Caco-2 (cell line): ENCODE measurements at regions of chr14 and their contacts with region 1.

Region 1: DNA sequence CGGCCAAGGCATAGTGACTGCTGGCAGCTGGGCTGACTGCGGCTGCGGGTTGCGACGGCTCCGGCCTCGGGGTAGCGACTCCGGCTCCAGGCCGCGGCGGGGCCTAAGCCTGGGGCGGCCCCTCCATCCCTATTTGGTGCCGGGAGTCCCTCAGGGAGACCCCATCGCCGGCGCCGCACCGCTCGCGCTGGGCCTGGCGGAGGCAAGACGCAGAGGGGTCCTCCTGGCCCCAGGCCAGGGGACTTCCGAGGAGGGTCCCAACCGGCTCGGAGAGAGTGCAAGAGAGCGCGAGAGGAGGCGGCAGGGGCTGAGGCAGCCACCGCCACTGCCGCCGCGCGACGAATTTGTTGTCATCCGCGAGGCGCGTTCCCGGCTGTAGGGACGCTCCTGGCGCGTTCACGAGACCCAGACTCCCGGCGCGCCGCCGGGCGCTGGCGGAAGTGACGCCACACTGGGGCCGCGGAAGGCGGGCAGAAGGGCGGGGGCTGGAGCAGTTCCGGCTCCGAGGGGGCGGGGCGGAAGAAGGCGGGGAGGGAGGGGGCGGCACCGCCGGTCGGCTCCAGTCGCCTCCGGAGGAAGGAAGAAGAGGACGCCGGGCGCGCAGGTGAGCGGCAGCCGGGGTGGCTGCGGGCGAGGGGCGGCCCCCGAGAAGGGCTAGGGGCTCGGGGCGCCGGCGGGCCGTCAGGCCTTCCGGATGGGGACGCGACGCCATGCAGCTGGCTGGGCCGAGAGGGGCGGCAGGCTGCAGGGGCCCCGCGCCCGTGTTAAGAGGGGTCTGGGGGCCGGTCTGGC is at the starts of genes ATG2B and GSKIP:
- DNase-seq: peak; percentile 94 to 96
- H3K4me3 ChIP-seq: peak within 1 kb of the TSS; percentile 95
- H3K4me3 Mint-ChIP-seq: peak within 1 kb of the TSS; percentile 93
- H3K27ac Mint-ChIP-seq: peak within 1 kb of the TSS; percentile 82
- H3K4me1 ChIP-seq: peaks cover 18% of the 10 kb centered on the region; the same call in 1 of the 2 replicates
- H3K4me1 Mint-ChIP-seq: peaks cover 14% of the 10 kb centered on the region
- H3K27me3 ChIP-seq: no peaks in the 10 kb centered on the region
- H3K27me3 Mint-ChIP-seq: no peaks in the 10 kb centered on the region
- CTCF ChIP-seq: no peak
- total RNA-seq, gene ATG2B: 16.6 and 19.4 TPM in 2 replicates
- total RNA-seq, gene GSKIP: 24.1 and 27.9 TPM in 2 replicates

Region 2: GRCh38 chr14:96304956-96305355 is 58.2 kb before region 1 on chr14:
- CTCF ChIA-PET with region 1: interaction called, 3 read pairs
- POLR2A ChIA-PET with region 1: no interaction called
- intact Hi-C with region 1: loop called (anchors 1 kb)
- DNase-seq: no peak
- H3K4me3 ChIP-seq: no peak overlapping the region
- H3K4me3 Mint-ChIP-seq: no peak overlapping the region
- H3K27ac Mint-ChIP-seq: no peak overlapping the region
- H3K4me1 ChIP-seq: peaks cover 20% of the 10 kb centered on the region
- H3K4me1 Mint-ChIP-seq: peaks cover 14% of the 10 kb centered on the region
- H3K27me3 ChIP-seq: no peaks in the 10 kb centered on the region
- H3K27me3 Mint-ChIP-seq: no peaks in the 10 kb centered on the region
- CTCF ChIP-seq: no peak

Region 3: GRCh38 chr14:96391293-96392118 is 28.3 kb after region 1 on chr14:
- CTCF ChIA-PET with region 1: no interaction called
- POLR2A ChIA-PET with region 1: no interaction called
- intact Hi-C with region 1: loop called (anchors 1 kb)
- DNase-seq: peak; percentile 95 to 99
- H3K4me3 ChIP-seq: peak overlapping the region; percentile 73
- H3K4me3 Mint-ChIP-seq: peak overlapping the region; percentile 81
- H3K27ac Mint-ChIP-seq: peak overlapping the region; percentile 76
- H3K4me1 ChIP-seq: peaks cover 13% of the 10 kb centered on the region; the same call in 1 of the 2 replicates
- H3K4me1 Mint-ChIP-seq: no peaks in the 10 kb centered on the region
- H3K27me3 ChIP-seq: no peaks in the 10 kb centered on the region
- H3K27me3 Mint-ChIP-seq: no peaks in the 10 kb centered on the region
- CTCF ChIP-seq: no peak

Region 4: DNA sequence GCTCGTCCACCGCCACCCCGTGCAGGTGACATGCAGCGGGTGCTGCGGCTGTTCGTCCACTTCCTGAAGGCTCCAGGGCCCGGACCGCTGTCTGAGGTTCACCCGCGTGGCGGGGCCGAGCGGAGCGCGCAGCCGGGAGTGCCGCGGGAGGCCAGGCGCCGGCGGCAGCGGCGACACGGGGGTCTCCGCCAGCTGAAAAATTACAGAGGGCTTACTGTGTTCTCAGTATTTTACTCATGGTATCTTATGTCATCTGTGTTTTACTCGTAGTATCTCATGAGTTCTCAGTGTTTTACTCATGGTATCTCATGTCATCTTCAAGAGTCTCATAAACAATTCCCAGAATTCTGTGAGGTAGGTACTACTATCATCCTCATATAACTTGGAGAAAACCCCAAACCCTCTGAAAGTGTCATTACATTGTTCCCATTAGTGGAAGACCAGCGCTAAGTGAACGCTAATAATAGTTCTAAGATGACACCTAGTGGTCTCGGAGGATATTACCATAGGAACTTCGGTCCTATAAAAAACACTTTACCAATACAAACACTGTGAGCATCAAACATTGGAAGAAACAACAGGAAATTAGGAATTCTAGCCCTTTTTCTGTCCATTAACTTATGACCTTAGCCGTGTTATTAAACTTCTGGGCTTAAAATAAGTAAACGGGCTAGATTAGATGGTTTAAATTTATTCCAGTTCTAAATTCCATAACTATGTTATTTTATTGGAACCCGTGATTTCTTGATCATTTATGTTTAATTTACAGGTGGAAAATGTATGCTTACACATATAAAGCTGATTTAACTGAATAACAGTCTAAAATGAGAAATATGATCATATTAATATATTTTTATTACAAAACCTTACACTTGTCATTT is 61.2 kb after region 1 on chr14:
- CTCF ChIA-PET with region 1: no interaction called
- POLR2A ChIA-PET with region 1: no interaction called
- intact Hi-C with region 1: loop called (anchors 1 kb)
- DNase-seq: peak in 1 of 2 experiments; percentile 70
- H3K4me3 ChIP-seq: peak overlapping the region; percentile 38
- H3K4me3 Mint-ChIP-seq: peak overlapping the region; percentile 69
- H3K27ac Mint-ChIP-seq: no peak overlapping the region
- H3K4me1 ChIP-seq: no peaks in the 10 kb centered on the region
- H3K4me1 Mint-ChIP-seq: no peaks in the 10 kb centered on the region
- H3K27me3 ChIP-seq: no peaks in the 10 kb centered on the region
- H3K27me3 Mint-ChIP-seq: no peaks in the 10 kb centered on the region
- CTCF ChIP-seq: peak; percentile 54 to 62

Region 5: GRCh38 chr14:96461950-96462683 is 99.0 kb after region 1 on chr14:
- CTCF ChIA-PET with region 1: no interaction called
- POLR2A ChIA-PET with region 1: no interaction called
- intact Hi-C with region 1: loop called (anchors 2 kb)
- DNase-seq: peak; percentile 94 to 97
- H3K4me3 ChIP-seq: 0 out of 2 replicates have a peak overlapping the region, but pooled peaks have one; percentile 8
- H3K4me3 Mint-ChIP-seq: peak overlapping the region; percentile 76
- H3K27ac Mint-ChIP-seq: peak overlapping the region; percentile 94
- H3K4me1 ChIP-seq: peaks cover 49% of the 10 kb centered on the region
- H3K4me1 Mint-ChIP-seq: peaks cover 23% of the 10 kb centered on the region
- H3K27me3 ChIP-seq: no peaks in the 10 kb centered on the region
- H3K27me3 Mint-ChIP-seq: no peaks in the 10 kb centered on the region
- CTCF ChIP-seq: no peak

Region 6: DNA sequence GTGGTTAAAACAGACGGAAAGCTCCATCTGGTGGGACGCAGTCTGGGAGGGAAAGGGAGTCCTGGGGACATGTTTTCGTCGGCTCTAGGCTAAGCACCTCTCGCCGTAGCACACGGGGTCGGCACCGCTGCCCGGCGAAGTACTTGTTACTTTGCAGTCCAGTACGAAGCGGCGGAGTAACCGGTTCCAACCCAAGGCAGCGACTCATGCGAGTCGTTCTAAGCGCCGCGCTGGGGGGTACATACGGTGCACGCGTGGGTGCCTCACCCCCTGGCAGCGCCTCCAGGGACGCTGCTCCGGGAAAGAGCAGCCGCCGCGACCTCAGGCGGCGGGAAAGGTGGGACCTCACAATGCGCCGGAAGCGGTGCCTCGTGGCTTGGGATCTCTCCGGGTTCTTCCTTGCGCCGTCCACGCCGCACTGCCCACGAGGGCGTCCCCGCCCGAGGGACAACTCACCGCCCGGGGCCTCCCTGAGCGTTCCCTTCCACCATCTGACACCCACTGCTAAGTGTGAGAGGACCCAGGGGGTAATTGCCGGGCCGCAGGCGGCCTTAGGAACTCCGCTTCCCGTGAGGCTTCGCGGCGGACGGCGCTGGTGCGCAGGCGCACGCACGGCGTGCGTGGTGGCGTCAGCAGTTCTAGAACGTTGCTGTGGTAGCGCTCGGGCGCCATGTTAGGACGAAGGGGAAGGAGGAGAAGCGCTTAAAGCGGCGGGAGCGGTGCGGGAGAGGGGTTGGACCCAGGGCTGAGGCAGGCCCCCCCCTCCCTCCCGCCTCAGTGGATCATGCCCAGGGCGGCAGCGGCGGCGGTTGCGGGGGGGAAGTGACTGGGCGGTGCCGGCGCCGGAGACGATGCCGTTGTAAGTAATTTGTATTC is 138.8 kb after region 1 on chr14 and contains the start of gene PAPOLA:
- CTCF ChIA-PET with region 1: no interaction called
- POLR2A ChIA-PET with region 1: no interaction called
- intact Hi-C with region 1: loop called (anchors 2 kb)
- DNase-seq: peak; percentile 95 to 96
- H3K4me3 ChIP-seq: peak within 1 kb of the TSS; percentile 93
- H3K4me3 Mint-ChIP-seq: peak within 1 kb of the TSS; percentile 99
- H3K27ac Mint-ChIP-seq: peak within 1 kb of the TSS; percentile 99
- H3K4me1 ChIP-seq: peaks cover 8% of the 10 kb centered on the region; the same call in 1 of the 2 replicates
- H3K4me1 Mint-ChIP-seq: peaks cover 24% of the 10 kb centered on the region
- H3K27me3 ChIP-seq: no peaks in the 10 kb centered on the region
- H3K27me3 Mint-ChIP-seq: no peaks in the 10 kb centered on the region
- CTCF ChIP-seq: peak in 1 of 2 experiments; percentile 31
- total RNA-seq, gene PAPOLA: 204 and 207 TPM in 2 replicates